ENCODE measurements at regions of chr19 and their contacts with region 1.

Region 1: DNA sequence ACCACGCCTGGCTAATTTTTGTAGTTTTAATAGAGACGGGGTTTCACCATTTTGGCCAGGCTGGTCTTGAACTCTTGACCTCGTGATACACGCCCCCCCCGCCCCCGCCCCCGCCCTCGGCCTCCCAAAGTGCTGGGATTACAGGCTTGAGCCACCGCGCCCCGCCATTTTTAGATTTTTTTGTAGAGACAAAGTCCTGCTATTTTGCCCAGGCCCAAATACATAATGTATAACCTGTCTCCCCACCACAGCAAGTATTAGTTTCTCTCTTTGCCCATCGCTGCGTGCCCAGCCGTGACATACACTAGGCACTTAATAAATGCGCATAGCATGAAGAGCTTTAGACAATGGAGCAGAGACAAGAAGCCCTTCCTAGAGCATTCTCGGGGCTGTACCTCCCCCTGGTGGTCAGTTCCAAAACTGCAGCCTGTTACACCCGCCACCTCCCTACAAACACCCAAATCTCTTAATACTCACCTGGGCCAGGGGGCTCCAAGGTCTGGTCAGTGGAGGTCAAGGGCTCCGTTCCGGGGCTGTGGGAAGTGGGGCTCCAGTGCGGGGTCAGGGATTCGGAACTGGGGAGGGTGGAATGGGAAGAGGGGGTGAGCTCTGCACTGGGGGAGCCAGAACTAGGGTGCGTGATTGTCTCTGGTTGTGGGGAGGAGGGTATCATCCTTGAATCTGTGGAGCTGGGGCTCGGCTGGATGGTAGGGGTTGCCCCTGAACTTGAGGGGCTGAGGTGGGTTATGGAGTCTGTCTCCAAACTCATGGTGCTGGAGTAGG is 22.5 kb downstream of the IQCN start:
- DNase-seq: peak; percentile 70
- H3K4me3 ChIP-seq: no peak overlapping the region
- H3K27ac ChIP-seq: no peak overlapping the region
- H3K4me1 ChIP-seq: no peaks in the 10 kb centered on the region
- H3K27me3 ChIP-seq: peaks cover 0 to 8% of the 10 kb centered on the region in 2 experiments
- CTCF ChIP-seq: peak; percentile 82 to 92
- POLR2A ChIP-seq: no peak

Region 2: GRCh38 chr19:18007044-18007916 is 244.5 kb before region 1 on chr19:
- CTCF ChIA-PET with region 1: interaction called, 3 read pairs
- POLR2A ChIA-PET with region 1: interaction called, 3 read pairs
- dilution Hi-C with region 1: no loop called
- intact Hi-C with region 1: loop called (anchors 5 kb)
- DNase-seq: peak; percentile 80
- H3K4me3 ChIP-seq: peak overlapping the region in 2 of 3 experiments; percentile 18 to 37
- H3K27ac ChIP-seq: peak overlapping the region; percentile 22
- H3K4me1 ChIP-seq: peaks cover 9% of the 10 kb centered on the region
- H3K27me3 ChIP-seq: no peaks in the 10 kb centered on the region
- CTCF ChIP-seq: peak; percentile 94 to 96
- POLR2A ChIP-seq: no peak

Region 3: DNA sequence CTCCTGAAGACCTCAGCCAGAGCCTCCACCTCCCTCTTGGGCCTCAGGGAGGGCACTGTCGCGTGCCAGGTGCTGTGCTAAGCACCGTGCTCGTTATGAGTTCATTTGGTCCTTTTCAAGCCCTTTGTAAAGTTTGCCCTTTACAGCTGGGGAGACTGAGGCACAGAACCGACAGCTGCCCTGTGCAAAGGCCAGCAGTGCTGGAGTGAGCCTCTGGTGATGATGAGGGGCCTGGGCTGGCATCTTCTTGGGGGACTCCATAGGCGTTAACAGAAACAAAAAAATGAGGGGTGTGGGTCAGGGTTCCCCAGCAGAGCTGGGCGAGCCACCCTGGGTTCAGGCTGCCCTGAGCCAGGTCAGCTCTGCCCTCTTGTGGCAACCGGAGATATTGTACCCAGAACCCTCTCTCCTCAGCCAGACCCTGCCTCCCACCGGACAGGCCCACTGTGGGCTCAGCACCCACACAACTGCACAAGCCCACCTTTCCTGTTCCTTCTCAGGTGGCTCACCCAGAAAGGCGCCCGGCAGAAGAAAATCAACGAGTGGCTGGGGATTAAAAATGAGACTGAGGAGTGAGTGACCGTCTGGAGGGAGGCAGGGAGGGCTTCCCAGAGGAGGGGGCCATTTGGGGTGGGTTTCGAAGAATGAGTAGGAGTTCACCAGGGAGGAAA is 83.7 kb before region 1 on chr19:
- CTCF ChIA-PET with region 1: interaction called, 15 read pairs
- POLR2A ChIA-PET with region 1: no interaction called
- dilution Hi-C with region 1: no loop called
- intact Hi-C with region 1: no loop called
- DNase-seq: peak; percentile 24
- H3K4me3 ChIP-seq: no peak overlapping the region
- H3K27ac ChIP-seq: no peak overlapping the region
- H3K4me1 ChIP-seq: no peaks in the 10 kb centered on the region
- H3K27me3 ChIP-seq: no peaks in the 10 kb centered on the region
- CTCF ChIP-seq: peak; percentile 63 to 84
- POLR2A ChIP-seq: no peak

Region 4: DNA sequence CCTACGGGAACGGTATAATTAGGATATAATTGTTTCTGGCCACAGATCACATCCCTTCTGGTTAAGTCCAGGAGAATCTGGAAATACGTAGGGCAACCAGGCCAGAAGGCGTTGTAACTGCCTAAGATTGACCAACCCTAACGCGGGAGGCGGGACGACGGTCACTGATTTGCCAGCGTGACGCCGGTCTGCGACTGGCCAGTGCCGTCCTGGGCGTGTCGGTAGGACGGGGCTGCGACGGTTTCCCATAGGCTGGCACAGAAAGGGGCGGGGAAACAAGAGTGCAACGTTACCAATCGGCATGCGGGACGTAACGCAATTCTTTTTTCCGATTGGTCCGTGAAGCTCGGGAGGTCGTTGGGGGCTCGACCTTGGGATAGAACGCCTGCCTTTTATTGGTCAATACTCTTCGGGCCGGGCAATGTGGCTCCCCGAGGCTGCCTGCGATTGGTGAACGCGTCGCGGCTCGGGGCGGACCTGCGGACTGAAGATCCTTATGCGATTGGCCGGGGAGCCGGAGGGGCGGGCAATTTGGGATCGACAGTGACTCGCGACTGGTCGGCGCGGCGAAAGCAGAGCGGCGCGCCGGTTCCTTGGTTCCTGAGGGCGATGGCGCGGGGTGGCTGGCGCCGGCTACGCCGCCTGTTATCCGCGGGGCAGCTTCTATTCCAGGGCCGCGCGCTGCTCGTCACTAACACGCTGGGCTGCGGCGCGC is 58.9 kb before region 1 on chr19 and contains the start of gene MPV17L2:
- CTCF ChIA-PET with region 1: interaction called, 100 read pairs
- POLR2A ChIA-PET with region 1: no interaction called
- dilution Hi-C with region 1: no loop called
- intact Hi-C with region 1: loop called (anchors 1 kb)
- DNase-seq: peak; percentile 100
- H3K4me3 ChIP-seq: peak within 1 kb of the TSS; percentile 78 to 85 (median 82)
- H3K27ac ChIP-seq: peak within 1 kb of the TSS; percentile 56
- H3K4me1 ChIP-seq: peaks cover 14% of the 10 kb centered on the region
- H3K27me3 ChIP-seq: no peaks in the 10 kb centered on the region
- CTCF ChIP-seq: no peak
- POLR2A ChIP-seq: peak; percentile 66
- total RNA-seq, gene MPV17L2: 13.8 and 16.1 TPM in 2 replicates

Region 5: GRCh38 chr19:18224525-18225354 is 27.0 kb before region 1 on chr19:
- CTCF ChIA-PET with region 1: interaction called, 27 read pairs
- POLR2A ChIA-PET with region 1: no interaction called
- dilution Hi-C with region 1: no loop called
- intact Hi-C with region 1: no loop called
- DNase-seq: peak; percentile 99
- H3K4me3 ChIP-seq: peak overlapping the region in 1 of 3 experiments; percentile 4
- H3K27ac ChIP-seq: no peak overlapping the region
- H3K4me1 ChIP-seq: peaks cover 9% of the 10 kb centered on the region
- H3K27me3 ChIP-seq: peaks cover 5% of the 10 kb centered on the region in 2 experiments
- CTCF ChIP-seq: no peak
- POLR2A ChIP-seq: no peak

Region 6: GRCh38 chr19:18239303-18239702 is 12.5 kb before region 1 on chr19:
- CTCF ChIA-PET with region 1: interaction called, 17 read pairs
- POLR2A ChIA-PET with region 1: no interaction called
- dilution Hi-C with region 1: no loop called
- intact Hi-C with region 1: no loop called
- DNase-seq: no peak
- H3K4me3 ChIP-seq: no peak overlapping the region
- H3K27ac ChIP-seq: no peak overlapping the region
- H3K4me1 ChIP-seq: no peaks in the 10 kb centered on the region
- H3K27me3 ChIP-seq: no peaks in the 10 kb centered on the region
- CTCF ChIP-seq: no peak
- POLR2A ChIP-seq: no peak